ENCODE measurements at regions of chr17 and their contacts with region 1.

Region 1: DNA sequence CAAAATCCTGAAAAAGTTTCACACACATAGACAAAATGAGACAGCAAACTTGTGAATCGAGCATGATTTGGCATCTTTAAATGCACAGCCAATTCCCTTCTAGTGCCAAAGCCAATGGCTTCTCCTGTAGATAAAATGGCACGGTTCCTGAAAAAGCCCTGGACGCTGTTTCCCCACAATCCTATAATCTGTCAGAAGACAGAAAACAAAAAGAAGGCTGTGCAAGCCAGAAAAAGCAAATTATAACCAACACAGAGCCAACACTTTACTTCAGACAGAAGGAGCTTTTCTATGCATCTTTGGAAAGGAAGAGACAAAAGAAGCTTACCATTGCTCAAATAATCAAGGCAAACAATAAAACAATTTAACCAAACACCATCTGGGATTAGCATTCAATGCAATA is 23.8 kb downstream of the FAM222B start:
- DNase-seq: no peak
- H3K4me3 ChIP-seq: no peak overlapping the region
- H3K27ac ChIP-seq: no peak overlapping the region
- H3K4me1 ChIP-seq: peaks cover 0 to 7% (median 2%) of the 10 kb centered on the region in 4 donors
- H3K27me3 ChIP-seq: no peaks in the 10 kb centered on the region
- CTCF ChIP-seq: no peak
- EP300 ChIP-seq: no peak
- POLR2A ChIP-seq: no peak

Region 2: DNA sequence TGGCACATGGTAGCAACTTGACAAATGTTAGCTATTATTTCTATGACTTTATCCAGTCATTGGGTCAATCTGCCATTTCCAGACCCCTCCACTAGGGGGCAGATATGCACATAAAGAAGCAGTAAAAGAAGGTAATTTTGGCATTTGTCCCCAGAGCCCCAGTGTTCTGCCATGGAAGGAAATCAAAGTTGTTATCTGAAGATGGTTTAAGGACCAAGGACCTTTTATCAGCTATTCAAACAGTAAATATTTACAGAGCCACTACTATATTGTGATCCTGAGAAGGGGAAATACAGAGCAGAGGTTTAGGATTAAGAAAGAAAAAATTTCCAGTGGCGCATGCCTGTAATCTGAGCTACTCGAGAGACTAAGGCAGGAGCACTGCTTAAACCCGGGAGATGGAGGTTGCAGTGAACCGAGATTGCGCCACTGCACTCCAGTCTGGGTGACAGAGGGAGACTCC is 55.0 kb before region 1 on chr17:
- intact Hi-C with region 1: no loop called
- DNase-seq: no peak
- H3K4me3 ChIP-seq: no peak overlapping the region
- H3K27ac ChIP-seq: no peak overlapping the region
- H3K4me1 ChIP-seq: peaks cover 17 to 27% (median 27%) of the 10 kb centered on the region in 4 donors
- H3K27me3 ChIP-seq: no peaks in the 10 kb centered on the region
- CTCF ChIP-seq: peak; percentile 90 to 93 (median 90)
- EP300 ChIP-seq: no peak
- POLR2A ChIP-seq: no peak

Region 3: DNA sequence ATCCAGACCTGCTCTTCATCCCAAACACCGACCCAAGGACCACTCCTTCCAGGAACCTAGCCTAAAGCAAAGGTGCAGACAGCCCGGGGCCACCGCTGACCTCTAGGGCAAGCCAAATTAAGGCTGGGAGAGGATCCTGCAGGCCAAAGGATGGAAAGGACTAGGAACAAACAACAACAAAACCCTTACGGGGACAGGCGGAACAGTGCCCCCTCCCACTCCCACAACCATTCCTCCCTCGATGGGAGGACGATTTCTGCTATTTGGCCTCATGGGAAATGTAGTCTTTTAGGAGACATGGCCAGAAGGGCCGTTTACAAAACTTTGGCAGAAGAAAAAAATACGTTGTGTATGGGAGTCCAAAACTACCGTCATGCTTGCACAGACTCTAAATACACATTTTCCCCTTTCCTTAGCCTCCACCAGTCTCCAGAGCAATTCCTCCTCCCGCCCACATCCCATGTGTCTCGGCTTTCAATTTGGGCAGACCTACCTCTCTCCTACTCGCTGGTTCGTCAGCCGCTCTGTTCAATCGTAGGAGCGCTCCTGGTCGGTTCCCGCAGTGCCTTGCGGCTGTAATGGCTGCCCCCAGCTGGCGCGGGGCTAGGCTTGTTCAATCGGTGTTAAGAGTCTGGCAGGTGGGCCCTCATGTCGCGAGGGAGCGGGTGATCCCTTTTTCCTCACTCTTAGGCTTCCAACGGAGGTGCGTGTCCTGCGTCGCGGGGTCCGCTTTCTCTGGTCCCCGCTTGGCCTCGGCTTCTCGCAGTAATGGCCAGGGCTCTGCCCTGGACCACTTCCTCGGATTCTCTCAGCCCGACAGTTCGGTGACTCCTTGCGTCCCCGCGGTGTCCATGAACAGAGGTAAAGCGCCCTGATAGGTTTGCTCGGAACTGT is 35.9 kb after region 1 on chr17 and contains the start of gene ERAL1:
- intact Hi-C with region 1: loop called (anchors 5 kb)
- DNase-seq: peak; percentile 95
- H3K4me3 ChIP-seq: peak within 1 kb of the TSS; percentile 65 to 80 (median 67)
- H3K27ac ChIP-seq: peak within 1 kb of the TSS; percentile 70 to 82 (median 76)
- H3K4me1 ChIP-seq: peaks cover 11 to 18% (median 16%) of the 10 kb centered on the region in 4 donors
- H3K27me3 ChIP-seq: no peaks in the 10 kb centered on the region
- CTCF ChIP-seq: peak in 1 of 3 experiments; percentile 30
- EP300 ChIP-seq: no peak
- POLR2A ChIP-seq: peak; percentile 30
- total RNA-seq, gene ERAL1: 24.5 to 38.0 (median 27.7) TPM

Measured in esophagus muscularis mucosa (tissue), 4 donors.